ENCODE measurements at regions of chr14 and their contacts with region 1.

Region 1: GRCh38 chr14:67240978-67241414 is 239 bp upstream of the PALS1 start:
- DNase-seq: peak; percentile 91 to 97 (median 96)
- H3K4me3 ChIP-seq: peak overlapping the region; percentile 72 to 100 (median 94)
- H3K27ac ChIP-seq: peak overlapping the region; percentile 81 to 99 (median 97)
- H3K27me3 ChIP-seq: no peaks in the 10 kb centered on the region
- CTCF ChIP-seq: peak in 7 of 56 donors; percentile 3 to 41 (median 14)

Region 2: DNA sequence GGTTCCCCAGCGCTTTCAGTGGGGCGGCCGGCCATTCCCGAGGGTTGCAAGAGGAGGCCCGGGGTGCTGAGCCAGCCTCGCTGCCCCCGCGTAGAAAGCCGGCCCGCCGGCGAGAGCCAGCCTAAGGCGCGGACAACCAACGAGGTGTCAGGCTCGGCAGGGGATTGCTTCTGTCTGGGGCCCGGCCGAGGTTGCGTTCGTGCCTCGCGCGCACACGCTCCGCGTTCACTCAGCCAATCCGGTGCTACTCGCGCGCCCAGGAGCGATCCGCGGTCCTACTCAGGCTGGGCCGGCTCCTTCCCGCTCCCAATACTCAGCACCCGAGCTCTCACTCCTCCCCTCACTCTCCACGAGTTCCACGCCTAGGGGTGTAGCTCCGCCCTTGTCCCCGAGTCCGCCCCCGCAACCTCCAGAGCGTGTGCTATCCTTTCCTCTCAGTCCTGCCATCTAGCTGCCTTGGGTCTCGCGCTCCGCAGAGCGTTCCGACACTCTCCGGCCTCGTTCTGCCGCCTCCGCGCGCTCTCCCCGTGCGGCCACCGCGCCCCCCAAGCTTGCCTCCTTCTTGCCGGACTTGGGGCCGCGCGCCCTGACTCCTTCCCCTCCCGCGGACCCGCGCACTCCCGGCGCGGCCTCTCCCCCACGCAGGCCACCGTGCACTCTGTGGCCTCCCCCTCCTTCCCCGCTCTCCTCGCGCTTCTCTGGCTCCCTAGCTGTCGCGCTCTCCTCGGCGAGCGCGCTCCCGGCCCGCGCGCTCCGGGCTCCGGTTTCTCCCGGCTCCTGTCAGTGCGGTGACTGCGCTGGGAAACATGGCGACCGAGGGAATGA is 733.1 kb before region 1 on chr14 and contains the start of gene GPHN:
- intact Hi-C with region 1: loop called in 1 of 2 experiments (anchors 2 kb)
- DNase-seq: peak; percentile 90 to 97 (median 96)
- H3K4me3 ChIP-seq: peak within 1 kb of the TSS; percentile 63 to 99 (median 91)
- H3K27ac ChIP-seq: peak within 1 kb of the TSS; percentile 84 to 99 (median 95)
- H3K27me3 ChIP-seq: no peaks in the 10 kb centered on the region
- CTCF ChIP-seq: peak; percentile 23 to 82 (median 58)
- total RNA-seq, gene GPHN: 61.8 to 136 (median 95.7) TPM

Region 3: DNA sequence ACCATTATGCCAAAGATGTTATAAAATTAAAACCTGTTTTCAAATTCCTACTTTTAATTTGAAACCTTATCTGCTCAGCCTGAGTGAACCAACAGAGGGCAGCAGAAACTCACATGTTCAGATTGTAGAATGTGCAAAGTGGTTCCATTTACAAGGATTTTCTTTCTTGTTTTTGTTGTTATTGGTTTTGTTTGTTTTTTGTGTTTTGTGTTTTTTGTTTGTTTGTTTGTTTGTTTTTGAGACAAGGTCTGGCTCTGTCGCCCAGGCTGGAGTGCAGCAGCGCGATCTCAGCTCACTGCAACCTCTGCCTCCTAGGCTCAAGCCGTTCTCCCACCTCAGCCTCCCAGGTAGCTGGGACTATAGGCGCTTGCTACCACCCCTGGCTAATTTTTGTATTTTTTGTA is 74.5 kb before region 1 on chr14:
- intact Hi-C with region 1: loop called in 1 of 2 experiments (anchors 5 kb)
- DNase-seq: peak in 2 of 10 donors; percentile 42 to 53
- H3K4me3 ChIP-seq: no peak overlapping the region
- H3K27ac ChIP-seq: peak overlapping the region in 20 of 59 donors; percentile 2 to 52 (median 39)
- H3K27me3 ChIP-seq: no peaks in the 10 kb centered on the region
- CTCF ChIP-seq: peak; percentile 58 to 97 (median 85)

Region 4: GRCh38 chr14:67187776-67188175 is 53.2 kb before region 1 on chr14:
- intact Hi-C with region 1: no loop called
- DNase-seq: no peak
- H3K4me3 ChIP-seq: no peak overlapping the region
- H3K27ac ChIP-seq: no peak overlapping the region
- H3K27me3 ChIP-seq: no peaks in the 10 kb centered on the region
- CTCF ChIP-seq: no peak

Region 5: DNA sequence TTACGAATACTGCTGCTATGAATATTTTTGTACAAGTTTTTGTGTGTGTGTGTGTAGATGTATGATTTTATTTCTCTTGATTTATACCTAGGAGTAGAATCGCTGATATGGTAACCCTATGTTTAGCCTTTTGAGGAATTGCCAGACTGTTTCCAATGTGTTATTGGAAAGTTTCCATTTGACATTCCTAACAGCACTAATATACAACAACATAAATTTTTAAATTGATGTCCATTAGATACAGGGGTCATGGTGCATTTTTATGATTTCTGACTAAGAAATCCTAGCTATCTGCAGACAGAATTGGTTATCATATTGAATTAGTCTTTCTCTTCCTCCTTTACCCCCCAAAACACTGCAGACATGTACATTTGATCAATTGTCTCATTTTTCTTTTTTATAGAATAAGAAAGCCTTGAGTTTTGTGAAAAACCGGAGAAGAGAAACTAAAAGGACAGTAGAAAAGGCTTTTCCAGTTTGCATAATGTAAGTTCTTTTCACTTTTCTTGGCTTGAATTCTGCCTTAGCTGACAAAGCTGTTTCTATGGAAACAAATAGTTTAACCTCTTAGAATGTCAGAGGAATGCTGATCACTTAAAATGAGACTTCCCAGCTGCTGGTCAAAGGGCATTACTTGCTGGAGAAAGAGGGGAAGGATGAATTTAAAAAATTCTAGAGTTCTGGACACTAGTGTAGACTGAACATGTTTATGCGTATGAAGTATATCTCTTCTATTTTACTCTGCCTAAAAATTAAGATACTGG is 28.5 kb after region 1 on chr14:
- intact Hi-C with region 1: loop called in 1 of 2 experiments (anchors 2 kb)
- DNase-seq: no peak
- H3K4me3 ChIP-seq: peak overlapping the region in 47 of 59 donors; percentile 1 to 60 (median 26)
- H3K27ac ChIP-seq: peak overlapping the region; percentile 44 to 98 (median 91)
- H3K27me3 ChIP-seq: no peaks in the 10 kb centered on the region
- CTCF ChIP-seq: no peak

Region 6: GRCh38 chr14:67276131-67276530 is 35.1 kb after region 1 on chr14:
- intact Hi-C with region 1: loop called (anchors 2 kb)
- DNase-seq: no peak
- H3K4me3 ChIP-seq: peak overlapping the region in 14 of 59 donors; percentile 2 to 47 (median 22)
- H3K27ac ChIP-seq: peak overlapping the region; percentile 41 to 95 (median 84)
- H3K27me3 ChIP-seq: no peaks in the 10 kb centered on the region
- CTCF ChIP-seq: no peak

Region 7: DNA sequence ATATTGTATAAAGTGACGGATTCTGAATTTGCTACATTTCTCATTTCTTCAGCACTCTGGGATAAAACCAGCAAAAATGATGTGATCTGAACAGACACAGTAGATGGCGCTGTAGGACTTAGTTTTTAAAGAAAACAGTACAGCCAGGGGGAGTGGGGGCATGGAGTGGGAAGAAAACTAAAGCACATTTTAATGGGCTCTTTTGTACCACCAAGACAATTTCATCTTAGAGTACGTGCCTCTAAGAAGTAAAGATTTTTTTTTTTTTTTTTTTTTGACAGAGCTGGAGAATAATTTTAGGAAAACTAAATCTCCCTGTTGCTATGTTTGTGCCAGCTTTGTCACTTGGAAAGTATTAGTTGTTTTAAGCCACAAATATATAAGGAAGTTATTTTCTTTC is 703.0 kb after region 1 on chr14:
- intact Hi-C with region 1: no loop called
- DNase-seq: peak in 6 of 10 donors; percentile 7 to 70 (median 32)
- H3K4me3 ChIP-seq: peak overlapping the region in 1 of 59 donors; percentile 16
- H3K27ac ChIP-seq: no peak overlapping the region
- H3K27me3 ChIP-seq: no peaks in the 10 kb centered on the region
- CTCF ChIP-seq: peak; percentile 64 to 90 (median 80)

Measured in dorsolateral prefrontal cortex (tissue), 120 donors.